CD4-positive, alpha-beta T cell (primary cell): ENCODE measurements at regions of chr1 and their contacts with region 1.

Region 1: GRCh38 chr1:10494754-10495474 is 20.2 kb downstream of the PEX14 start:
- DNase-seq: peak; percentile 53 to 87 (median 78)
- ATAC-seq: peak; percentile 74
- H3K4me3 ChIP-seq: peak overlapping the region; percentile 53
- H3K4me3 Mint-ChIP-seq: peak overlapping the region; percentile 80
- H3K27ac ChIP-seq: peak overlapping the region; percentile 50 to 60
- H3K27ac Mint-ChIP-seq: peak overlapping the region; percentile 93
- H3K4me1 ChIP-seq: peaks cover 33% of the 10 kb centered on the region
- H3K4me1 Mint-ChIP-seq: peaks cover 59% of the 10 kb centered on the region
- H3K27me3 ChIP-seq: no peaks in the 10 kb centered on the region
- H3K27me3 Mint-ChIP-seq: no peaks in the 10 kb centered on the region
- CTCF ChIP-seq: peak; percentile 99

Region 2: GRCh38 chr1:10087210-10087609 is 407.7 kb before region 1 on chr1:
- CTCF ChIA-PET with region 1: no interaction called
- POLR2A ChIA-PET with region 1: no interaction called
- intact Hi-C with region 1: no loop called
- DNase-seq: no peak
- ATAC-seq: no peak
- H3K4me3 ChIP-seq: no peak overlapping the region
- H3K4me3 Mint-ChIP-seq: no peak overlapping the region
- H3K27ac ChIP-seq: no peak overlapping the region
- H3K27ac Mint-ChIP-seq: no peak overlapping the region
- H3K4me1 ChIP-seq: no peaks in the 10 kb centered on the region
- H3K4me1 Mint-ChIP-seq: peaks cover 26% of the 10 kb centered on the region
- H3K27me3 ChIP-seq: no peaks in the 10 kb centered on the region
- H3K27me3 Mint-ChIP-seq: no peaks in the 10 kb centered on the region
- CTCF ChIP-seq: no peak

Region 3: DNA sequence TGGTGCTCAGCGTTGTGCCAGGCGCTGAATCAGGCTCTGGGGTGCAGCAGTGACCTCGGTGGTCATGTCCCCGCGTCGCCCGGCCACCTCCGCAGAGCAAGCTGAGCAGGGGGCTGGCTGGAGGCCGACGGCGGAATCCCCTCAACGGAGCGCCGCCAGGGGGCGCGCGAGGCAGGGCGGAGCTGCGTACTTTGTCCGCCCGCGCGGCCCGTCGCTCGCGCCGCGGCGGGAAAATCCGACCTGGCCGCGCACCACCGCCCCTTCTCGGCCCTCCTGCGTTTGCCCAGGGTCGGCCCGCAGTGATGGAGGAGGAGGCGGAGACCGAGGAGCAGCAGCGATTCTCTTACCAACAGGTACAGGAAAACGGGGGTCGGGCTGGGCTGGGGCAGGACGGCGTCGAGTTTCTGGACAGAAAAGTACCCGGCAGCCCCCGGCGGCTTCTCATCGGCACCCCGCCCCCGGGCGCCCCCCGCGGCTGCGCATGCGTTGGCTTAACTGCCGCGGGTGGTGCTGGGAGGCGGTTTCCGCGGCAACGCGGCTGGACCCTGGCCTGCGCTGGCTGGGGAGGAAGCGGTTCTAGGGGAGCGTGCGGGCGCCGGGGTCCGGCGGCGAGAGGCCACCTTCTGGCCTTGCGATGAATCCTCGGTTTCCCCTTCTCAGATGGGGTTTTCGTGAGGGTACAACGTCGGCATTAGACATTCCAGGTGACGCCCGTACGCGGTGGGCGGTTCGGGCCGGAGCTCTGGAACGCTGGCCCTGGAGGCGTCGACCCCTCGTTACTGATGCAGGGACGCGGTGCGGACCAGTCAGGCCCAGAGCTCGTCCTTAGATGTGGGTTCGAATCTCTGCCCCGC is 64.5 kb before region 1 on chr1 and contains the start of gene CENPS:
- CTCF ChIA-PET with region 1: interaction called, 35 read pairs
- POLR2A ChIA-PET with region 1: interaction called, 20 read pairs
- intact Hi-C with region 1: loop called (anchors 1 kb)
- DNase-seq: peak; percentile 72 to 95 (median 90)
- ATAC-seq: peak; percentile 79
- H3K4me3 ChIP-seq: peak within 1 kb of the TSS; percentile 71
- H3K4me3 Mint-ChIP-seq: peak within 1 kb of the TSS; percentile 94
- H3K27ac ChIP-seq: peak within 1 kb of the TSS; percentile 65 to 68
- H3K27ac Mint-ChIP-seq: peak within 1 kb of the TSS; percentile 92
- H3K4me1 ChIP-seq: peaks cover 26% of the 10 kb centered on the region
- H3K4me1 Mint-ChIP-seq: peaks cover 23% of the 10 kb centered on the region
- H3K27me3 ChIP-seq: no peaks in the 10 kb centered on the region
- H3K27me3 Mint-ChIP-seq: no peaks in the 10 kb centered on the region
- CTCF ChIP-seq: peak; percentile 98
- total RNA-seq, gene CENPS: 3.7 to 4.0 TPM

Region 4: GRCh38 chr1:10484521-10484920 is 10.4 kb before region 1 on chr1:
- CTCF ChIA-PET with region 1: interaction called, 16 read pairs
- POLR2A ChIA-PET with region 1: no interaction called
- intact Hi-C with region 1: no loop called
- DNase-seq: no peak
- ATAC-seq: no peak
- H3K4me3 ChIP-seq: no peak overlapping the region
- H3K4me3 Mint-ChIP-seq: no peak overlapping the region
- H3K27ac ChIP-seq: no peak overlapping the region
- H3K27ac Mint-ChIP-seq: no peak overlapping the region
- H3K4me1 ChIP-seq: no peaks in the 10 kb centered on the region
- H3K4me1 Mint-ChIP-seq: peaks cover 19% of the 10 kb centered on the region
- H3K27me3 ChIP-seq: no peaks in the 10 kb centered on the region
- H3K27me3 Mint-ChIP-seq: no peaks in the 10 kb centered on the region
- CTCF ChIP-seq: no peak

Region 5: DNA sequence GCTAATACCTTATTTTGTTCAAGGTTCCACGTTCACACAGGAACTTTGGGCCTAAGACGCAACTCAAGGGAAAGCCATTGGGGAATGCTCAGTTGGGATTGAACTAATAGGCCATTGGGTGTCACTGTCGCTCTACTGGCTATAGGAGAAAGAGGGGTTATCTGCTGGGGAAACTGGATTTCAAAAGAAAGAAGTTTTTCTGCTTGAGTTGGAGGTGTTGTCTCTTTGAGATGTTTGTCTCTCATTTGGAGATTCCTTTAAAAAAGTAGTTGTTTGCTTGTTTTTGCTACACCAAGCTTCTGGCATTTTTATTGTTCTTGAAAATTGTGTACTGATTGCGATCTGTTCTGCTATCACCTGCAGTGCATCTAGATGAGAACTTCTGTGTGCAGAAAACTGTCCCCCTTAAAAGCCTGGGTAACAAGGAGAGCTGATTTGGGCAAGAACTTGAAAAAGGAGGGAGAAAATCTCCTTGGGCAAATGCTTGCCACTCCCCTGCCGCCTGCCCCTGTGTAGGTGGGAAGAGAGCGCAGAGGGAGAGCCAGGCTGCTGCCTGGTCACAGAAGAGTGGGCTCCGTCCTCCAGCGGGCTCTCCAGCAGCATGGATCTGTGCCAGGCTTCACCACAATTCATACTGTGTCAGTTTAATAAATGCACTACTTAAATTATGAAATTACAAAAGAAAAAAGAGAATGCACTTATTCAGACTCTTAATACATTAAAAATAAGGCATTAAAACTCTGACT is 19.7 kb after region 1 on chr1:
- CTCF ChIA-PET with region 1: interaction called, 126 read pairs
- POLR2A ChIA-PET with region 1: interaction called, 33 read pairs
- intact Hi-C with region 1: loop called in 1 of 2 experiments (anchors 1 kb)
- DNase-seq: peak in 4 of 14 experiments; percentile 41 to 55 (median 50)
- ATAC-seq: no peak
- H3K4me3 ChIP-seq: no peak overlapping the region
- H3K4me3 Mint-ChIP-seq: peak overlapping the region; percentile 50
- H3K27ac ChIP-seq: peak overlapping the region in 1 of 2 donors; percentile 35
- H3K27ac Mint-ChIP-seq: peak overlapping the region; percentile 83
- H3K4me1 ChIP-seq: peaks cover 75% of the 10 kb centered on the region
- H3K4me1 Mint-ChIP-seq: peaks cover 84% of the 10 kb centered on the region
- H3K27me3 ChIP-seq: no peaks in the 10 kb centered on the region
- H3K27me3 Mint-ChIP-seq: no peaks in the 10 kb centered on the region
- CTCF ChIP-seq: no peak

Region 6: DNA sequence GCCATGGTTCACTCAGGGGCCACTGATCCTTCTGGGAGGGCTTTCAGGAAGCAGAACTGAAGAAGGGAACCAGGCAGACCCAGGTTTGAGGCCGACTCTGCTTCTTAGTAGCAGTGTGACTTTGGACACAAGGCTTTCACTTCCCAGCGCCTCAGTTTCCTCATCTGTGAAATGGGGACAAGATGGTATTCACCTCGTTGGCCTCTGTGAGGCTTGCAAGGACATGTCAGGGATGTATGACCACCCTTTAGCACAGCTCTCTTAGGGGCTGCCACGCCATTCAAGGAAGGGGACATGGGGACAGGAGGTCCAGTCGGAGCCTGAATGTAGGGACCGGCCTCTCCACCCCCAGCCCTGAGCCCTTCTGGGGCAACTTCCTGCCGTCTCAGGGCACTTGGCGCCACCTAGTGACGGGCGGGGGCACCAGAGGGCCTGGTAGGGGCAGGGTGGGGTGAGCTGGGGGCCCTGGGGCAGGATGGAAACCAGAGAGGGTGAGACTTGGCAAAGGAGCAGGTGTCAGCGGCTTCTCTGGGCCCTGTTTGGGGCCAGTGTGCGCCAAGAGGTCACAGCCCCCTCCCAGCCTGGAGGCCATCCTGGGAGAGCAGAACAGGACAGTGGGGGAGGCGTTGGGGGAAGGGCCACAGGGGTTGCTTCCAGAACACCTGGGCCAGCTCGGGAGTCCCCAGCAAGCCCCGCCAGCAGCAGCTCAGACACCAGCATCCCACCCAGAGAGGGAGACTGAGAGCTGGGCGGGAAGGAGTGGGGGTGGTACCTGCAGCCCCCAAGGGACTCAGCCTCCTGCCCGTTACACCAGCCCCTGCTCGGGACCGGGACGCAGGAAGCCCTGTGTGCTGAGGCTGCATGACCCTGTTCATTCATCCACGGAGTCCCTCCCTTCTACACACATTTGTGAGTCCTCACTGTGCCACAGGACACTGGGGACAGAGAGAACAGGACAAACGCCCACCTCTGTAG is 415.1 kb after region 1 on chr1:
- CTCF ChIA-PET with region 1: interaction called, 6 read pairs
- POLR2A ChIA-PET with region 1: interaction called, 3 read pairs
- intact Hi-C with region 1: loop called in 1 of 2 experiments (anchors 2 kb)
- DNase-seq: peak; percentile 63 to 81 (median 73)
- ATAC-seq: peak; percentile 91
- H3K4me3 ChIP-seq: no peak overlapping the region
- H3K4me3 Mint-ChIP-seq: no peak overlapping the region
- H3K27ac ChIP-seq: no peak overlapping the region
- H3K27ac Mint-ChIP-seq: no peak overlapping the region
- H3K4me1 ChIP-seq: peaks cover 24% of the 10 kb centered on the region
- H3K4me1 Mint-ChIP-seq: peaks cover 19% of the 10 kb centered on the region
- H3K27me3 ChIP-seq: no peaks in the 10 kb centered on the region
- H3K27me3 Mint-ChIP-seq: peaks cover 5% of the 10 kb centered on the region
- CTCF ChIP-seq: peak; percentile 71

Region 7: DNA sequence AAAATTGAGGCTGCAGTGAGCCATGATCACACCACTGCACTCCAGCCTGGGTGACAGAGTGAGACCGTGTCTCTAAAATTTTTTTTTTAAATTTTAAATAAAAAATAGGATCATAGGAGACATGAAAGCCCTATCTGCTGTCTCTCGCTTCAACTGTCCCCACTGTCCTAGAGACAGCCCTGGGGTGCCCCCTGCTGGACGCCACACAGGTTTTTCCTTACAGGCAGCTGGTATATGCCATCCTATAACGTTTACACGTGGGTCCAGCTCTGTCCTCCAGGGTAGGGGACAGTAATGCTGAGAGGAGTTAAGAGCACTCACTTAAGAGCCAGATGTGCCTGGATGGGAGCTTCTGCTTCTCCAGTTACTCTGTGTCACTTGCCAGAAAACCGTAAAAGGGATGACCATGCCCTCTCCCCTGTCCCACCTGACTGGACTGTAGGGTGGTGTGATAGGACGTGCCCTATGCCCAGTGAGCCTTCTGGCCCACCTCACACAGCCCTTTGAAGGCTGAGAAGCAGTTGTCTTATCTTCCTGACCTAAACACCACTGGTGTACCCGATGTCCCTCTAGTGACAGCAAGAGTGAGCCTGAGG is 1150.9 kb after region 1 on chr1:
- CTCF ChIA-PET with region 1: no interaction called
- POLR2A ChIA-PET with region 1: no interaction called
- intact Hi-C with region 1: loop called in 1 of 2 experiments (anchors 10 kb)
- DNase-seq: peak; percentile 71 to 90 (median 78)
- ATAC-seq: peak; percentile 59
- H3K4me3 ChIP-seq: no peak overlapping the region
- H3K4me3 Mint-ChIP-seq: no peak overlapping the region
- H3K27ac ChIP-seq: no peak overlapping the region
- H3K27ac Mint-ChIP-seq: no peak overlapping the region
- H3K4me1 ChIP-seq: peaks cover 26% of the 10 kb centered on the region
- H3K4me1 Mint-ChIP-seq: peaks cover 19% of the 10 kb centered on the region
- H3K27me3 ChIP-seq: no peaks in the 10 kb centered on the region
- H3K27me3 Mint-ChIP-seq: peaks cover 5% of the 10 kb centered on the region
- CTCF ChIP-seq: peak; percentile 75